GM10248 (cell line): ENCODE measurements at regions of chr12 and their contacts with region 1.

Region 1: GRCh38 chr12:9813821-9814809 is 13.2 kb upstream of the KLRF1 start:
- DNase-seq: peak; percentile 92
- CTCF ChIP-seq: peak; percentile 98

Region 2: GRCh38 chr12:9797722-9798619 is 16.1 kb before region 1 on chr12:
- CTCF ChIA-PET with region 1: interaction called, 33 read pairs
- POLR2A ChIA-PET with region 1: no interaction called
- DNase-seq: peak; percentile 41
- CTCF ChIP-seq: peak; percentile 87

Region 3: DNA sequence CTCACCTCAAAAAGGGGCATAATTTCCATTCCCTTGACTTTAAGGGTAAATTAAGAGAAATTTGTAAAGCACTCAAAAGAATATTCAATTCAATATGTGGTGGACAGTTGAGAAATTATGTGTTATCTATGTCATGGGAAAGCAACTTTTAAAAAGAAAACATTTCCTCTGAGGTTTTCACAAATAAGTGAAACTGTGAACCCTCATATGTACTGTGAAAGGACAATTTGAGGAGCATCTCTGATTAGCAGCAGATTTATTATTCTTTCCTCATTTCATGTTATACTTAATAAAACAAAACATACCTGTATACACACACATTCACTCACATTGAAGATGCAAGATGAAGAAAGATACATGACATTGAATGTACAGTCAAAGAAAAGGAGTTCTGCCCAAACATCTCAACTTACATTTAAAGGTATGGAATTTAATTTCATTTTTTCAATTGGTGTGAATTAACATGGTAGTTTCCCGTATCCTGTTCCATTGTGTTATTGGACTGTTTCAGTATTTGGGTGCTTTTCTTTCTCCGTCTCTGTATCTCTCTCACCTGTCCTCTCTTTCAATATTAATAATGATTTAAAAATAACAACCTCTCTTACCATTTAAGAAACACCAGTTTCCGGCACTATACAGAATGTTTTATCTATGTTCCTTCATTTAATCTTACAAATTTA is 13.2 kb after region 1 on chr12 and contains the start of gene KLRF1:
- CTCF ChIA-PET with region 1: interaction called, 18 read pairs
- POLR2A ChIA-PET with region 1: no interaction called
- DNase-seq: no peak
- CTCF ChIP-seq: no peak

Region 4: GRCh38 chr12:9843416-9843815 is 29.3 kb after region 1 on chr12:
- CTCF ChIA-PET with region 1: interaction called, 14 read pairs
- POLR2A ChIA-PET with region 1: no interaction called
- DNase-seq: no peak
- CTCF ChIP-seq: no peak

Region 5: DNA sequence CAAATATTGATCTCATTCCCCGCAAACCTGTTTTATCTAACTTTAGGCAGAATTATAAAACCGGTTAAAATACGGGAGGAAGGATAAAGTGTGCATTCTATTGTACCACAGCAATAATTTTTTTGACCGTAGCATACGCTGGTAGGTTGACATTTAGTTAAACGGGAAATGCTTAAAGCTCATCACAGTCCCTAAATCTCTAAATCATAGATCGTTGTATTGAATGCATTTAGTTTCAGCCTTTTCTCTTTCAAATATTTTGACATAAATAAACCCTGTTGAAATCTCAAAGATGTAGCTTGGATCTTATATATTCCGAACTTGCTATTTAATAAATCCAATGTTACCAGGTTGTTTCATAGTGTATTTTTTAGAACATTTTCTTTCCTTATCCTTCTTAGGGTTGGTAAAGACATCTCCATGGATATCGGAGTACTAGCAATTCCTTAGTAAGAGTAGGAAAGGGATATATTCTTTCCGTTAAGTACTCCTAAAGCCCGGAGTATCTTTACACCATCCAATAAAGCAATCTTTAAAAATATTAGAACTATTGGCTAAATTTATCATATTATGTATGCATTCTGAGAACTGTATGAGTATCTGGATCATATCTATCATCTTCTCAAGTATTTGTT is 54.3 kb after region 1 on chr12:
- CTCF ChIA-PET with region 1: interaction called, 10 read pairs
- POLR2A ChIA-PET with region 1: no interaction called
- DNase-seq: no peak
- CTCF ChIP-seq: no peak

Region 6: GRCh38 chr12:9925708-9926393 is 111.7 kb after region 1 on chr12:
- CTCF ChIA-PET with region 1: interaction called, 23 read pairs
- POLR2A ChIA-PET with region 1: no interaction called
- DNase-seq: no peak
- CTCF ChIP-seq: peak; percentile 42

Region 7: DNA sequence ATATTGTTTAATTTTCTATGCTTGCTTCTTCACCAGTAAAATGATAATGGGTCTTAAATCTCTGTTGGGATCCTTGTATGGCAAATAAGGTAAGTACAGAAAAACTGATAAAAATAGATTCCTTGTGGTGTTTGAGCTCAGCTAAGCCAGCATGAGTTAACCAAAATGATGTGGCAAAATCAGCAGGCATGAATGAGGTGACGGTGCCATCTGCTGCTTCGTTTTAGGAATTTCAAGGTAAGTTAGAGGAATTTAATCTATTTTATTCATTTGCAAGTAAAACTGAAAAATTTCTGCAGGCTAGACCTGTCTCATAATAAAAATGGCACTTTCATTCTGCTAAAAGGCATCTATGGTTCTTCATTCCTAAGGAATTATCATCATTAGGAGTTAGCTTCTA is 325.9 kb after region 1 on chr12:
- CTCF ChIA-PET with region 1: interaction called, 14 read pairs
- POLR2A ChIA-PET with region 1: no interaction called
- DNase-seq: peak; percentile 35
- CTCF ChIP-seq: peak; percentile 38